ENCODE measurements at regions of chr18 and their contacts with region 1.

Region 1: GRCh38 chr18:23131693-23132319 is 3.5 kb upstream of the CABLES1 start:
- DNase-seq: peak; percentile 84
- ATAC-seq: peak; percentile 34
- H3K4me3 ChIP-seq: no peak overlapping the region
- H3K27ac ChIP-seq: no peak overlapping the region
- H3K4me1 ChIP-seq: peaks cover 4% of the 10 kb centered on the region; the same call in 1 of the 2 replicates
- H3K27me3 ChIP-seq: no peaks in the 10 kb centered on the region
- CTCF ChIP-seq: peak; percentile 79
- POLR2A ChIP-seq: no peak
- RAD21 ChIP-seq: peak; percentile 85

Region 2: DNA sequence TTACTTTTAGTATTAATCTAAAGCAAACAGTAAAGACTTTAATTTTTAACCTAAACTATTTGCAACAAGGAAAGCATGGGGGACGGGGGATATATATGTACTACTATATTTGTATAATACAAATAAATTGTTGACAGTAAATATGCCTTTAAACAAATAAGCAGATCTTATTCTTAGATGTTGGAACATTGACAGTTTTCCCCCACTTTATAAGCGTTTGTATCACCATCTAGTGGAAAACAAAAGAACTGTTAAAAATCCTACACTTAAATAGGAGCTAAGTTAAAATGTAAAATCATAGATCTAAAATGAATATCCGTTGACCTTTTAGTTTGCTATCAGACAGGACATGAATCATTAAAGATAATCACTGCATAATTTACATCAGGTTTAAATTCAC is 148.6 kb before region 1 on chr18:
- CTCF ChIA-PET with region 1: no interaction called
- POLR2A ChIA-PET with region 1: no interaction called
- dilution Hi-C with region 1: no loop called
- in situ Hi-C with region 1: no loop called
- intact Hi-C with region 1: no loop called
- DNase-seq: peak; percentile 64
- ATAC-seq: peak; percentile 59
- H3K4me3 ChIP-seq: no peak overlapping the region
- H3K27ac ChIP-seq: no peak overlapping the region
- H3K4me1 ChIP-seq: peaks cover under 1% of the 10 kb centered on the region; the same call in 1 of the 2 replicates
- H3K27me3 ChIP-seq: no peaks in the 10 kb centered on the region
- CTCF ChIP-seq: peak; percentile 66
- POLR2A ChIP-seq: no peak
- RAD21 ChIP-seq: peak; percentile 67

Region 3: DNA sequence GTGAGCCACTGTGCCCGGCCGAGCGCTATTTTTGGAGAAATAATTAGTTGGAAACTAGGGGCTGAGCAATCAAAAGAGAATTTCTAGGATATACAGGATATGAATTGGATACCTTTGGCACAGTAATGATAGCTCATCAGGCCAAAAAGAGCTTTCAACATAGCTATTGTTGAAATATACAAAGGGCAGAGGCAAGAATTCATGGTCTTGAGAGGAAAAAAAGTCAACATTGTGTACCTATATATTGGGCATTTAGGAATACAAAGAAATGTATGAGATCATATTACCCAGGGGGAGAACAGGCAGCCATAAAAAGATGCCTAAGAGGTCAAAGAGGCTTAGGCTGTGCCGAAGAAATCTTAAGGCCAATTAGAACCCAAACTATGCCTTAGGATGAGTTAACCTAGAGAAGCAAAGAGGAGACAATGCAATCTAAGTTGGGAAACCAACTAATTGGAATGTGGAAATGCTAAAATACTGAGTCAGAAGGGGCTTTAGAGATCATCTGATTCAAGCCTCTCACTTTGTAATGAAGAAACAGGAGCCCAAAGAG is 99.7 kb before region 1 on chr18:
- CTCF ChIA-PET with region 1: interaction called, 5 read pairs
- POLR2A ChIA-PET with region 1: no interaction called
- dilution Hi-C with region 1: no loop called
- in situ Hi-C with region 1: no loop called
- intact Hi-C with region 1: loop called (anchors 5 kb)
- DNase-seq: peak; percentile 83
- ATAC-seq: peak; percentile 71
- H3K4me3 ChIP-seq: no peak overlapping the region
- H3K27ac ChIP-seq: peak overlapping the region; percentile 97
- H3K4me1 ChIP-seq: peaks cover 8% of the 10 kb centered on the region
- H3K27me3 ChIP-seq: no peaks in the 10 kb centered on the region
- CTCF ChIP-seq: no peak
- POLR2A ChIP-seq: no peak
- RAD21 ChIP-seq: no peak

Region 4: DNA sequence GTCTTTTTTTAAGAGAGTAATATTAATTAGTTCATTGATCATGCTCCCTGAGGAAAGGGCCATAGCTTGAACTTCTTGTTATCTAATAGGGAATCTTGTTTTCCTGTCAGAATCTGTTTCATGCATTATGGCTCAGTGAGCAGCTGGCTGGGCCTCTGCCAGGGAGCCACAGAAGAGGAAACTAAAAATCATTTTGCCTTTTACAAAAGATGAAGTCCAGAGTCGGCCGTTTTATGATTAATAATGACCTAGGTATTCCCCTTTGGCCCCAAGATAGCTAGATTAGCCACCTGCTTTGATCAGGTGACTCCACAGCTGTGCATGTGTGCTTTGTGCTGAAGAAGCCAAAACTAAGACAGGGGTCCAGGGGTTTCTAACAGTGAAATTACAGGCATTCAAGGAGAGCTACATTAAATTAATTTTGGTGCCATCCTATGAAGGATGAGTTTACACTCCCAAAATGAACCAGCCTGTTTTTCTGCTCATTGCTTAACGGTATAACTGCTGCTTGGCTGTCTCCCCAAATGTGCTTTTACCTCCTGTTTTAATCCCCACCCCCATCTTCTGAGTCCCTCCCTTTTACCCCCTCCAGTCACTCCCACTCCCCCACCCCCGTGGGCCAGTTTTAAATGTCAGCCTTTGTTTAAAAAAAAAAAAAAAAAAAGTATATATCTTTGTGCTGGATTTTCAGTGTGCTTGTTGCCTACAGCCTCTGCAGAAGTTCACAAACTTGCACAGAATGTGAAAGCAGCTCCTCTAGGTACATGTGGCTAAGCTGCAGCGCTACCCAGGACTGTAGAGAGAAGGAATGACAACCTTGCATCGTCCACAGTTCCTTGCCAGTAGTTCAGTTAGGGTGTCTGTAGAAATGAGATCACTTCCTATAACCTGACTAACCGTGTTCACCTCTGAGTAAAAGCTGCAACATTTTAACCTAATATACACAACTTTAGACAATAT is 96.6 kb after region 1 on chr18:
- CTCF ChIA-PET with region 1: interaction called, 6 read pairs
- POLR2A ChIA-PET with region 1: interaction called, 4 read pairs
- dilution Hi-C with region 1: no loop called
- in situ Hi-C with region 1: no loop called
- intact Hi-C with region 1: loop called (anchors 5 kb)
- DNase-seq: peak; percentile 75
- ATAC-seq: no peak
- H3K4me3 ChIP-seq: no peak overlapping the region
- H3K27ac ChIP-seq: peak overlapping the region; percentile 72
- H3K4me1 ChIP-seq: peaks cover 38% of the 10 kb centered on the region
- H3K27me3 ChIP-seq: no peaks in the 10 kb centered on the region
- CTCF ChIP-seq: no peak
- POLR2A ChIP-seq: no peak
- RAD21 ChIP-seq: no peak

Region 5: DNA sequence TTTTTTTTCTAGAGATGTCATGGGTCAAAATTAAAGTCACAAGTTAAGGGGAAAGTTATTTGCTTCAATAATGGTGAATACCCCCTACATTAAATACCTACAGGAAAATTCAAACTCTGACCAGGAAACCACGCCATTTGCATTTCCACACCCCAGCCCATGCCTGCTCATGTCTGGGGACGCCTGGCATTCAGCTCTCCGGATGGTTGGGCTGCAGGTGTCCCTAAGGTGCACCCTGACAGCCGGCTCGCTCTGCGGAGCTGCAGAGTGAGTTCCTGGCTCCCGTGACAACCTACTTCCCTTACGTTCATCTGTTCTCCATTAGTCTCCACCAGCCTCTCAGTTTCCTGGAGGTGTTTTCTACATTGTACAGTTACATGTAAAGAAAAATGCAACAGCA is 198.6 kb after region 1 on chr18:
- CTCF ChIA-PET with region 1: no interaction called
- POLR2A ChIA-PET with region 1: no interaction called
- dilution Hi-C with region 1: no loop called
- in situ Hi-C with region 1: no loop called
- intact Hi-C with region 1: no loop called
- DNase-seq: no peak
- ATAC-seq: no peak
- H3K4me3 ChIP-seq: no peak overlapping the region
- H3K27ac ChIP-seq: no peak overlapping the region
- H3K4me1 ChIP-seq: no peaks in the 10 kb centered on the region
- H3K27me3 ChIP-seq: no peaks in the 10 kb centered on the region
- CTCF ChIP-seq: no peak
- POLR2A ChIP-seq: no peak
- RAD21 ChIP-seq: no peak

Region 6: DNA sequence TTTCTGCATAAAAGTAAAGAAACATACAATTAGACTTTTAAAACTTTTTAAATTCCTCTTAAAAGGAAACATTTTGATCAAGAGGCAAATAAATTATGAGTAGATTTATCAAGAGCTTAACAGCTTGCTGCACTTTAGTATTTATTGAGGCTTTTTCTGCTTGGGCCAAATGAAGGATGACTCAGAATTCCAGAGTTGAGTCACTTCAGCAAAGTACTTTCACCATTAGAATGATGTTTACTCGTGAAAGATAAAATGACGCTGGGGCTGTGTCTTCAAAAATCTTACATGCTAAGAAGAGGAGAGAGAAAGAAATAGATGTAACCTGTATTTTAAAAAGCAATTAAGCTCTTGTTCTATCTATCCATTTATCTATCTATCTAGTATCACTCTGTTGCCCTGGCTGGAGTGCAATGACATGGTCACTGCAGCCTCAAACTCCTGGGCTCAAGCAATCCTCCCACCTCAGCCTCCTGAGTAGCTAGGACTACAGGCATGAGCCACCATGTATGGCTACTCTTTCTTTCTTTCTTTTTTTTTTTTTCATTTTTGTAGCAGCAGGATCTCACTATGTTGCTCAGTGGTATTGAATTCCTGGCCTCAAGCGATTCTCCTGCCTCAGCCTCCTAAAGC is 246.0 kb after region 1 on chr18:
- CTCF ChIA-PET with region 1: interaction called, 7 read pairs
- POLR2A ChIA-PET with region 1: no interaction called
- dilution Hi-C with region 1: no loop called
- in situ Hi-C with region 1: loop called (anchors 10 kb)
- intact Hi-C with region 1: loop called (anchors 1 kb)
- DNase-seq: peak; percentile 92
- ATAC-seq: peak; percentile 67
- H3K4me3 ChIP-seq: no peak overlapping the region
- H3K27ac ChIP-seq: peak overlapping the region; percentile 95
- H3K4me1 ChIP-seq: peaks cover 12% of the 10 kb centered on the region
- H3K27me3 ChIP-seq: no peaks in the 10 kb centered on the region
- CTCF ChIP-seq: no peak
- POLR2A ChIP-seq: no peak
- RAD21 ChIP-seq: no peak

Region 7: DNA sequence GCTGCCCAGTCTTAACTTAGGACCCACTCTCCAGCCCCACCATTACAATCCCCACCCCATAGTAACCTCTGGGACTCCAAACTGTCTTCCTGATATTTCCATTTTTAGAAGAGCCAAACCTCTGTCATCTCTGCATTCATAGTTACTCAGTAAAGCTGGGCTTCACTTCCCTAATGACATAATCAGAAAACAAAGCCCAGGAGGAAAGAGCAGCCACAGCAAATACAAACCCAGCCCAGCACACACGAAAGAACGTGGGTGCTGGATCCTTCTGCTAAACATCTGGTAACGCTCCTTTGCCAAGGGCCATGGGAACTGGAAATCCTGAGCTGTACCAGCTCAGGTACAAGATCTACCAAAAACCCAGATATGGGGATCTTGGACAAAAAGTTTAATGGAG is 284.5 kb after region 1 on chr18:
- CTCF ChIA-PET with region 1: interaction called, 5 read pairs
- POLR2A ChIA-PET with region 1: no interaction called
- dilution Hi-C with region 1: no loop called
- in situ Hi-C with region 1: loop called (anchors 5 kb)
- intact Hi-C with region 1: loop called (anchors 1 kb)
- DNase-seq: no peak
- ATAC-seq: no peak
- H3K4me3 ChIP-seq: no peak overlapping the region
- H3K27ac ChIP-seq: no peak overlapping the region
- H3K4me1 ChIP-seq: no peaks in the 10 kb centered on the region
- H3K27me3 ChIP-seq: no peaks in the 10 kb centered on the region
- CTCF ChIP-seq: no peak
- POLR2A ChIP-seq: no peak
- RAD21 ChIP-seq: no peak